Activated CD8-positive, alpha-beta memory T cell treated with anti-CD3 and anti-CD28 coated beads, Interleukin-2, amount 10 ng/mL, durations not matched to agents 7 days and 5 days (primary cell): ENCODE measurements at regions of chr1 and their contacts with region 1.

Region 1: DNA sequence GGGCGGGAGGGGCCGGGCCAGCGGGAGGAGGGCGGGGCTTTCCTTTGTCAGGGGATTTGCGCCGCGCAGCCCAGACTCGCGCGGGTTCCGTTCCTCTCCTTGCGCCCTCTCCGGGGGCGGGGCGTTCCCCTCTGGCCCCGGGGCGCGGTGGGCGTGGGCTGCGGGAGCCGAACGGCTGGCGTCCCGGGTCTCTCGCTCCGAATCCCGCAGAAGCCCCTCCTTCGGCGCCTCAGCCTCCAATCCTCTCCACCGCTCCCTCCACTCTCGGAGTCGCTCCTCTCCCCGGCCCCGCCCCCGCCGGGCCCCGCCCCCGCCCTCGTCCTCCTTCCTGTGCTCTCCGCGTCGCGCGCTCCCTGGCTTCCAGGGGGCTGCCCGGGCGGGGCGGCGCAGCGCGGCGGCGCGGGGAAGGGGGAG is 82.8 kb upstream of the BMP8A start:
- DNase-seq: peak; percentile 87
- ATAC-seq: peak; percentile 93
- H3K4me3 Mint-ChIP-seq: peak overlapping the region; percentile 75
- H3K27ac Mint-ChIP-seq: no peak overlapping the region
- H3K4me1 Mint-ChIP-seq: peaks cover 59% of the 10 kb centered on the region
- H3K27me3 Mint-ChIP-seq: no peaks in the 10 kb centered on the region

Region 2: GRCh38 chr1:39293375-39294070 is 115.1 kb before region 1 on chr1:
- CTCF ChIA-PET with region 1: no interaction called
- DNase-seq: no peak
- ATAC-seq: peak; percentile 42
- H3K4me3 Mint-ChIP-seq: no peak overlapping the region
- H3K27ac Mint-ChIP-seq: no peak overlapping the region
- H3K4me1 Mint-ChIP-seq: peaks cover 20% of the 10 kb centered on the region
- H3K27me3 Mint-ChIP-seq: no peaks in the 10 kb centered on the region

Region 3: GRCh38 chr1:39398278-39399021 is 10.2 kb before region 1 on chr1:
- CTCF ChIA-PET with region 1: interaction called, 27 read pairs
- DNase-seq: peak; percentile 56
- ATAC-seq: peak; percentile 75
- H3K4me3 Mint-ChIP-seq: no peak overlapping the region
- H3K27ac Mint-ChIP-seq: peak overlapping the region; percentile 47
- H3K4me1 Mint-ChIP-seq: peaks cover 63% of the 10 kb centered on the region
- H3K27me3 Mint-ChIP-seq: no peaks in the 10 kb centered on the region

Region 4: DNA sequence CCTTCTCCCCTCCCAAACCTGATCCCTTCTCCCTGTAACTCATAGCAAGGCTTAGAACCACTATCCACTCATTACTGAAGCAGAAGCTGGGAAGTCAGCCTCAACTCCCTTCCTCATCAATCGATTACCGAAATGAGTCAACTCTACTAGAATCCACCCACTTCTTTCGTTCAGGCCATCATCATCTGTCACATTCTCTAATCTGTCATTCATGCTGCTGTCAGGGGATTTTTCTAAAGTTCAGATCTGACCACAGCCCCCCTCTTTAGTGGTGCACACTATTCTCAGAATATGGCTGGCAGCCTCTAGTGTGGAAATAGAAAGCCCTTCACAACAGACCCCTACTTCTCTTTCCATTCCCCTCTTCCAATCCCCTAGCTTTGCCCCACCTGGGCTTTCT is 258.1 kb after region 1 on chr1:
- CTCF ChIA-PET with region 1: no interaction called
- DNase-seq: peak; percentile 73
- ATAC-seq: peak; percentile 85
- H3K4me3 Mint-ChIP-seq: no peak overlapping the region
- H3K27ac Mint-ChIP-seq: peak overlapping the region; percentile 31
- H3K4me1 Mint-ChIP-seq: peaks cover 27% of the 10 kb centered on the region
- H3K27me3 Mint-ChIP-seq: peaks cover 21% of the 10 kb centered on the region